Endothelial cell of umbilical vein (primary cell): ENCODE measurements at regions of chr3 and their contacts with region 1.

Region 1: GRCh38 chr3:52742418-52743041 is 28.2 kb downstream of the NEK4 start:
- DNase-seq: peak; percentile 58
- H3K4me3 ChIP-seq: no peak overlapping the region
- H3K27ac ChIP-seq: no peak overlapping the region
- H3K4me1 ChIP-seq: no peaks in the 10 kb centered on the region
- H3K27me3 ChIP-seq: no peaks in the 10 kb centered on the region
- CTCF ChIP-seq: peak; percentile 36 to 47
- POLR2A ChIP-seq: no peak

Region 2: GRCh38 chr3:52798978-52799476 is 56.5 kb after region 1 on chr3:
- CTCF ChIA-PET with region 1: interaction called, 4 read pairs
- POLR2A ChIA-PET with region 1: no interaction called
- dilution Hi-C with region 1: no loop called
- intact Hi-C with region 1: loop called (anchors 1 kb)
- DNase-seq: peak; percentile 18
- H3K4me3 ChIP-seq: no peak overlapping the region
- H3K27ac ChIP-seq: no peak overlapping the region
- H3K4me1 ChIP-seq: no peaks in the 10 kb centered on the region
- H3K27me3 ChIP-seq: no peaks in the 10 kb centered on the region
- CTCF ChIP-seq: peak; percentile 57 to 61
- POLR2A ChIP-seq: no peak

Region 3: GRCh38 chr3:52986938-52987337 is 244.4 kb after region 1 on chr3:
- CTCF ChIA-PET with region 1: interaction called, 15 read pairs
- POLR2A ChIA-PET with region 1: no interaction called
- dilution Hi-C with region 1: no loop called
- intact Hi-C with region 1: loop called (anchors 5 kb)
- DNase-seq: peak; percentile 40
- H3K4me3 ChIP-seq: no peak overlapping the region
- H3K27ac ChIP-seq: no peak overlapping the region
- H3K4me1 ChIP-seq: no peaks in the 10 kb centered on the region
- H3K27me3 ChIP-seq: no peaks in the 10 kb centered on the region
- CTCF ChIP-seq: peak; percentile 6 to 15
- POLR2A ChIP-seq: no peak

Region 4: GRCh38 chr3:53072653-53073552 is 330.4 kb after region 1 on chr3:
- CTCF ChIA-PET with region 1: interaction called, 3 read pairs
- POLR2A ChIA-PET with region 1: no interaction called
- dilution Hi-C with region 1: no loop called
- intact Hi-C with region 1: loop called (anchors 1 kb)
- DNase-seq: peak; percentile 73
- H3K4me3 ChIP-seq: peak overlapping the region; percentile 19 to 61 (median 38)
- H3K27ac ChIP-seq: peak overlapping the region; percentile 10
- H3K4me1 ChIP-seq: peaks cover 8% of the 10 kb centered on the region
- H3K27me3 ChIP-seq: peaks cover 0 to 2% of the 10 kb centered on the region in 2 experiments
- CTCF ChIP-seq: peak; percentile 98
- POLR2A ChIP-seq: no peak